Activated B cell treated with CpG ODN at 0.5 μM for 24 hours (primary cell): ENCODE measurements at regions of chr14 and their contacts with region 1.

Region 1: DNA sequence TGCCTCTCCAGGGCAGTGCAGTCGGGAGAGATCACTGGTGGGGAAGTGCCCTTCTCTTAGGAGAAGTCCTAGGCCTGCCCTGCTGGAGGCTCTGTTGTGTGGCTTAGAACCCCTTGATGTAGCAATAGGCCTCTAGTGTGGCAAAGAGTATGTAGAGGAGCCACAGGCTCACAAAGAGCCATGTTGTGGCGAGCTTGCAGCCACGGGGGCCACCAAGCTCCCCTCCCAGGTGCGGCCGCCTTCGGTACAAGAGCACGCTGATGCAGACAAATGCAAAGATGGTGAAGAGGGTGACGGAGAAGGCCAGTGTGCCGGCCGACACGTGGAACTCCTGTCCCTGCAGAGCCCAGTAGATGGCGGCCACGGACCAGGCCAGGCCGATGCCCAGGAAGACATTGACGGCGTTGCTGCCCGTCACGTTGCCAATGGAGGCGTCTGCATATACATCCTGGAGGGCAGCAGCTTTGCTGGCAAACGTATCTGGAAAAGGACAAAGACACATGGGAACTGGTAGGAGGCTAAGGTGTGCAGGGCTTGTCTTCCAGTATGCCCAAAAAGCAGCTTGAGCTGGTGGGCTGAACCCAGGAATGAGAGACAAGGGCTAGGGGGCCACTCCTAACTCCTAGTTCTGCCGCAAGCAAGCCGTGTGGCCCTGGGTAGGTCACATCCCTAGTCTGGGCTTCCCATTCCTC is 142.8 kb downstream of the SLC8A3 start:
- DNase-seq: no peak
- ATAC-seq: no peak
- H3K4me3 Mint-ChIP-seq: no peak overlapping the region
- H3K27ac Mint-ChIP-seq: no peak overlapping the region
- H3K4me1 Mint-ChIP-seq: no peaks in the 10 kb centered on the region
- H3K27me3 Mint-ChIP-seq: peaks cover 10% of the 10 kb centered on the region
- CTCF ChIP-seq: no peak

Region 2: GRCh38 chr14:70014406-70015095 is 31.4 kb before region 1 on chr14:
- CTCF ChIA-PET with region 1: no interaction called
- POLR2A ChIA-PET with region 1: no interaction called
- intact Hi-C with region 1: loop called (anchors 1 kb)
- DNase-seq: no peak
- ATAC-seq: no peak
- H3K4me3 Mint-ChIP-seq: no peak overlapping the region
- H3K27ac Mint-ChIP-seq: no peak overlapping the region
- H3K4me1 Mint-ChIP-seq: peaks cover 8% of the 10 kb centered on the region
- H3K27me3 Mint-ChIP-seq: peaks cover 5% of the 10 kb centered on the region
- CTCF ChIP-seq: no peak